OCI-LY7 (cell line): ENCODE measurements at regions of chr4 and their contacts with region 1.

Region 1: GRCh38 chr4:37675587-37676290 is 10.4 kb downstream of the RELL1 start:
- DNase-seq: peak; percentile 95
- H3K4me3 ChIP-seq: peak overlapping the region; percentile 53
- H3K27ac ChIP-seq: peak overlapping the region; percentile 94
- H3K4me1 ChIP-seq: peaks cover 74% of the 10 kb centered on the region
- CTCF ChIP-seq: no peak

Region 2: GRCh38 chr4:37648096-37648817 is 27.5 kb before region 1 on chr4:
- CTCF ChIA-PET with region 1: interaction called, 3 read pairs
- POLR2A ChIA-PET with region 1: interaction called, 8 read pairs
- intact Hi-C with region 1: loop called (anchors 1 kb)
- DNase-seq: no peak
- H3K4me3 ChIP-seq: no peak overlapping the region
- H3K27ac ChIP-seq: no peak overlapping the region
- H3K4me1 ChIP-seq: peaks cover 27% of the 10 kb centered on the region
- CTCF ChIP-seq: no peak

Region 3: GRCh38 chr4:37659696-37660095 is 16.0 kb before region 1 on chr4:
- CTCF ChIA-PET with region 1: no interaction called
- POLR2A ChIA-PET with region 1: interaction called, 14 read pairs
- intact Hi-C with region 1: no loop called
- DNase-seq: no peak
- H3K4me3 ChIP-seq: no peak overlapping the region
- H3K27ac ChIP-seq: no peak overlapping the region
- H3K4me1 ChIP-seq: no peaks in the 10 kb centered on the region
- CTCF ChIP-seq: no peak

Region 4: DNA sequence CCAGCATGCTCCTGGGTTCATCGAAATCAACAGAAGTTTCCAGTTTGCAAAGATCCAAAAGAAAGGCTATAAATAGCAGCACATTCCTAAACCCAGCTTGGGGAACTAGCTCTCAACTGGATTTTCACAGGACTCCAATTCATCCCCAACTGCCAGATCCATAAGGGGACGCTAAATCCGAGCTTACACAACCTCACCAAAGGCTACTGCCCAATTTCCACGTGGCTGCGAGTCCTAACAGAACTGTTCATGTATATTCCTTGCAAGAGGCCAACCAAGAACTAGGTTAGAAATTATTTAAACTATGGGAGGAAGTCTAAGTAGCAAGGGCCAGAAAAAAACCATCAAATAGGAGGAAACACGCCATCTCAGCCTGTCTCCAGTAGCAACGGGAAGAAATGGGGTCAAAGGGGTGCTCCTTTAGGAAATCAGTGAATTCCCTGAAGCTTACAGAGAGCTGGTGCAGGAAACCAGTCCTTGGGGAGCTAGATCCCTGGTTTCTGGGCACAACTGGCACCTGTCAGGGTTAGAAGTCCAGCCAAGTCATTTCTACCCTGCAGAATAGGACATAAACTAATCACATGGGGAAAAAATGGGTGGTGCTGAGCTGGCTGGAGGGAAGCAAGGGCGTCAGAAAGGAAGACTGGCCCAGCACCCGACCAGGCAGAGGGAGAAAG is 10.3 kb before region 1 on chr4:
- CTCF ChIA-PET with region 1: no interaction called
- POLR2A ChIA-PET with region 1: interaction called, 14 read pairs
- intact Hi-C with region 1: no loop called
- DNase-seq: no peak
- H3K4me3 ChIP-seq: no peak overlapping the region
- H3K27ac ChIP-seq: no peak overlapping the region
- H3K4me1 ChIP-seq: peaks cover 13% of the 10 kb centered on the region
- CTCF ChIP-seq: no peak